ENCODE measurements at regions of chr1 and their contacts with region 1.

Region 1: DNA sequence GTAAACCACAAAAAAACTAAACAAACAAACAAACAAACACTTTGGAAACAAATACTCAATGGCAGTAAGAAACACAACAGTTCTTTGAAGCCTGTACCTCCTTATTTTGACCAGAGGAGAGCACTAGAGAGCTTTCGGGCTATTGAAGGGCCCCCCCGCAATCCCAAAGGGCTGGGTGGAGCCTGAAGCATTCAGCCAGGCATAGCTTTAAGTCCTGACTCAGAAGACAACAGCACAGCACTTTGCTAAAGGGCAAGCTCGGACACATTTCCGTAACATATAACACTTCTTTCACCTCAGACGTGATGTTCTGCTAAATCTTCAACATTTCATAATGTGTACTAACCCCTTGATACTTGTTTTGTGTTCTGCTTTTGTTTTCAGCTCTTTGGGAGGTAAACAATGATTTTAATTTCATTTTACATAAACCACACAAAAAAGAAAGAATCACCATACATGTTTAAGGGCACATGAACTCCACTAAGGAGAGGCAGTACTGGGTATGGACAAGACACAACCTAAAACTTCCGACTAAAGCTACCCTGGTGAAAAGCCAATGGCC is 9.7 kb upstream of the SHCBP1L start:
- DNase-seq: peak; percentile 65 to 77
- ATAC-seq: peak; percentile 100

Region 2: GRCh38 chr1:181910905-181911304 is 1051.7 kb before region 1 on chr1:
- intact Hi-C with region 1: no loop called
- DNase-seq: no peak
- ATAC-seq: no peak

Region 3: DNA sequence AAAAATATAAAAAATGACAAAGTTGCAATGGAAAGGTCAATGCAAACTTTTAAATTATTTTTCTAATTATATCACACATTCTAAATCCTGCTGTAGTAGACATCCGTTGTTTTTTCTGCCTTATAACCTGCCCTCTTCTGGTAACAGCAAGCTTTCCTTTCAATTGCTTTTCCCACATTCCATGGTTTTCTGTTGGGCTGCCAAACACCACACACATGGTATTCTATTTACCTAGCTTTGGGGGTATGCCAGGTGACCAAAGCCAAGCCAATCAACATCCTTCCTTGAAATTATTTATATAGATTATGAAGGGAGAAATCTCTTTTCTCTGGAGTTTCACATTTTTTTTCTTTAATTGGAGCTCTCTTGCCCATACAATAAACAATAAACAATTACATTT is 57.2 kb after region 1 on chr1:
- intact Hi-C with region 1: loop called in 1 of 2 experiments (anchors 10 kb)
- DNase-seq: no peak
- ATAC-seq: no peak

Region 4: GRCh38 chr1:183124259-183124658 is 161.6 kb after region 1 on chr1:
- intact Hi-C with region 1: loop called in 1 of 2 experiments (anchors 10 kb)
- DNase-seq: peak in 1 of 2 donors; percentile 33
- ATAC-seq: no peak

Region 5: DNA sequence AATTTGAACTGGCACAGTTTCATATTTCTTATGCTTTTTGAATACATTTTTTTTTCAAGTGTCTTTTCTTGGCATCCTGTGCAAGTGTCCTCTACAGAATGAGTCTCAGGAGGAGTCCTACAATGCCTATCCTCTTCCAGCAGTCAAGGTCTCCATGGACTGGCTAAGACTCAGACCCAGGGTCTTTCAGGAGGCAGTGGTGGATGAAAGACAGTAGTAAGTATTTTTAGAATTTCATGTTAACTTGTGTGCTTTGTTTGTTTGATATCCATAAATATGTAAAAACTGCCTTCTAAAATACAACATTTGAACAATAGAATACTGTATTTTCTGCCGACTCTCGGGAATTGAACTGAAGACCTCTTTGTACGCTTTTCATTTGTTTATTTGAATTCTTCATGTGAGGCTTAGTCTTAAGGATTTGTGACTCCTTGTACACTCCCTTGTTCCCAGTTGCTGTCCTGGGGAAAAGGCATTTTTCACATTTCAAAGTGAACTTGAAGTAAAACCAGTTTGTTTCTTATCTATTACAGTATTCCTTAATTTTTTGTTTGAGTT is 571.1 kb after region 1 on chr1:
- intact Hi-C with region 1: no loop called
- DNase-seq: no peak
- ATAC-seq: no peak